ENCODE measurements at regions of chr11 and their contacts with region 1.

Region 1: GRCh38 chr11:35126000-35126878 is 12.7 kb upstream of the CD44 start:
- DNase-seq: peak; percentile 79
- H3K4me3 Mint-ChIP-seq: peak overlapping the region; percentile 74
- H3K27ac Mint-ChIP-seq: peak overlapping the region; percentile 80
- H3K4me1 Mint-ChIP-seq: peaks cover 50% of the 10 kb centered on the region
- H3K27me3 Mint-ChIP-seq: peaks cover 3% of the 10 kb centered on the region

Region 2: DNA sequence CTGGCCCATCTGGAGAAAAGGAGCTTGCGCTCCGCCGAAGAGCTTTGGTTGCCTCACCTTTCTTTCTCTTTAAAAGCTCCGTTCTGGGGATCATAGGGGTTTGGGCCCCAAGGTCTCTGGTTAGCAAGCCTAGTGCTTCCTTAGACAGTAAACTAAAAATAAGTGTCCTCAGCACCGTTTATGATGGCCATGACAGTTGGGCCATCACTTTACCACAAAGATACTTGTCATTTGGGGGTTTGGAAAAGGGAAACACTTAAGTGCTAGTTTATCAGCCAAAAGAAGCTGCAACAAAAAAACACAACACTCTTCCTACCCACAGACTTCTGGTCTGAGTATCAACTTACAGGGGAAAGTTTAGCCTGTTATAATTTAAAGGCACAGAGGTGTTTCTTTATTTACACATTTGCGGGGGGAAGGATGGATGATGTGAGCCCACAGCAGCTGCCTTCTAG is 75.7 kb before region 1 on chr11:
- intact Hi-C with region 1: no loop called
- DNase-seq: peak; percentile 73
- H3K4me3 Mint-ChIP-seq: peak overlapping the region; percentile 83
- H3K27ac Mint-ChIP-seq: peak overlapping the region; percentile 89
- H3K4me1 Mint-ChIP-seq: peaks cover 56% of the 10 kb centered on the region
- H3K27me3 Mint-ChIP-seq: no peaks in the 10 kb centered on the region

Region 3: GRCh38 chr11:35087648-35088047 is 38.6 kb before region 1 on chr11:
- intact Hi-C with region 1: loop called (anchors 1 kb)
- DNase-seq: peak; percentile 64
- H3K4me3 Mint-ChIP-seq: peak overlapping the region; percentile 9
- H3K27ac Mint-ChIP-seq: peak overlapping the region; percentile 61
- H3K4me1 Mint-ChIP-seq: peaks cover 51% of the 10 kb centered on the region
- H3K27me3 Mint-ChIP-seq: peaks cover 4% of the 10 kb centered on the region

Region 4: GRCh38 chr11:35138943-35139721 is 12.9 kb after region 1 on chr11 and contains the start of gene CD44:
- intact Hi-C with region 1: loop called (anchors 1 kb)
- DNase-seq: peak; percentile 91
- H3K4me3 Mint-ChIP-seq: peak within 1 kb of the TSS; percentile 94
- H3K27ac Mint-ChIP-seq: peak within 1 kb of the TSS; percentile 97
- H3K4me1 Mint-ChIP-seq: peaks cover 49% of the 10 kb centered on the region
- H3K27me3 Mint-ChIP-seq: no peaks in the 10 kb centered on the region
- total RNA-seq, gene CD44: 488 and 489 TPM in 2 replicates

Region 5: GRCh38 chr11:35165423-35166368 is 39.5 kb after region 1 on chr11:
- intact Hi-C with region 1: loop called (anchors 1 kb)
- DNase-seq: peak; percentile 98
- H3K4me3 Mint-ChIP-seq: peak overlapping the region; percentile 78
- H3K27ac Mint-ChIP-seq: peak overlapping the region; percentile 99
- H3K4me1 Mint-ChIP-seq: peaks cover 93% of the 10 kb centered on the region
- H3K27me3 Mint-ChIP-seq: no peaks in the 10 kb centered on the region

Region 6: GRCh38 chr11:35174666-35175065 is 48.4 kb after region 1 on chr11:
- intact Hi-C with region 1: loop called (anchors 1 kb)
- DNase-seq: peak; percentile 69
- H3K4me3 Mint-ChIP-seq: peak overlapping the region; percentile 57
- H3K27ac Mint-ChIP-seq: peak overlapping the region; percentile 85
- H3K4me1 Mint-ChIP-seq: peaks cover 85% of the 10 kb centered on the region
- H3K27me3 Mint-ChIP-seq: no peaks in the 10 kb centered on the region

Region 7: DNA sequence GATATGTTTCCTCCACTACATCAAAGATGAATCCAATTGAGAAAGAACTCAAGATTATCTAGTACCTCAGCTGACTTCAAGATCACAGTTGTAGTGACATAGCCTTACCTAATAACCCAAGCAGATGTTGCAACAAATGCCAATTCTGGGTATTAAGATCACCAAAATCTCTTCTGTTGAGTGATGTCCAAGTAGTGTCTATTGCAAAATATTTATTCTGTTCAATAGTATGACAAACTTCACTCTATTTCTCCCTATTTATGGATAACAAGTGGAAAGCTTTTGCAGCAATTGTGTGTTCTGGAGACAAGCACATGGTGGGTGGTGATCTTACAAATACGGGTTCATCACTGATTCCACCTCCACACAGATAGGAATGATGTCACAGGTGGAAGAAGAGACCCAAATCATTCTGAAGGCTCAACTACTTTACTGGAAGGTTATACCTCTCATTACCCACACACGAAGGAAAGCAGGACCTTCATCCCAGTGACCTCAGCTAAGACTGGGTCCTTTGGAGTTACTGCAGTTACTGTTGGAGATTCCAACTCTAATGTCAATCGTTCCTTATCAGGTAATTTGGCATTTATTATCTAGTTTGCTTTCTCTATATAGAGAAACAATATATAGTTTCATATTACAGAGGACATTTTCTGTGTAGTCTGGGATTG is 84.8 kb after region 1 on chr11:
- intact Hi-C with region 1: no loop called
- DNase-seq: no peak
- H3K4me3 Mint-ChIP-seq: no peak overlapping the region
- H3K27ac Mint-ChIP-seq: no peak overlapping the region
- H3K4me1 Mint-ChIP-seq: peaks cover 20% of the 10 kb centered on the region
- H3K27me3 Mint-ChIP-seq: no peaks in the 10 kb centered on the region

Region 8: DNA sequence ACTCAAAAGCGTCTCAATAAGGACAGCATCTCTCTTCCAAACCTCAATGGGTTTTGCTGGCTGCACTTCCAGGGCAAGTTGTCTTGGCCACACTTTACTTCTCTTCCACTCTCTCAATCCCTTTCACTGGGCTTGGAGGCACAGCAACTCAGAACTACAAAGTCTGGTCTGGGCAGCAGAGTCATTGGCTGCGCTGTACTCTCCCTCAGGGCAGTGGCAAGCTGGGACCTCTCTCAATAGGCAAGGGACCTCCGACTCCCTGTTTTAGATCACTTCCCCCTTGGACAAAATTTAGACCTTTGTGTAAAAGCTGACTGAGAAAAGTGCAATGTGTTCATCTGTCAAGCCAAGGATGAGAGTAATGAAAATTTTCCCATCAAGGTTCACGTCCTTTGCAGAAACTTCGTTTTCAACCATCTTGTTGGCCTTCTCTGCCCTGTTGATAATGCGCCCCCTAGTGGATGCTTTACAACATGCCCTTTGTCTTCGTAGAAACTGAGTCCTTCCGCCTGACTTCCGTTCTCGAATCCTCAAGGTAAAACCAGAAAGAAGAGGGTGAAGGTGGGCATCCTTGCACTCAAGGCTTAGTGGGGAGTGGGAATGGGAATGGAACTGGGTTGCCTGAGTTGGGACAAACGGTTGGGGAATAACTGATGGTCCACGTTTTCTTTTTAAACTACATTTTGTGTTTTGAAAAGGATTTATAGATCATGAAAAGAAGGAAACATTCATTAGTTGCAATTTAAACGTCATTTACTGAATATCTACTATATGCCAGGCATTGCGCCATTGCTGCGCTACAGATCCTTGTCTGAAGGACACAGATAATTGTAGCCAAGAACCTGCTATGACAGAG is 111.8 kb after region 1 on chr11:
- intact Hi-C with region 1: no loop called
- DNase-seq: peak; percentile 88
- H3K4me3 Mint-ChIP-seq: peak overlapping the region; percentile 33
- H3K27ac Mint-ChIP-seq: no peak overlapping the region
- H3K4me1 Mint-ChIP-seq: peaks cover 69% of the 10 kb centered on the region
- H3K27me3 Mint-ChIP-seq: peaks cover 7% of the 10 kb centered on the region

Region 9: GRCh38 chr11:35288817-35289541 is 162.7 kb after region 1 on chr11:
- intact Hi-C with region 1: loop called (anchors 5 kb)
- DNase-seq: no peak
- H3K4me3 Mint-ChIP-seq: peak overlapping the region; percentile 19
- H3K27ac Mint-ChIP-seq: peak overlapping the region; percentile 70
- H3K4me1 Mint-ChIP-seq: peaks cover 29% of the 10 kb centered on the region
- H3K27me3 Mint-ChIP-seq: no peaks in the 10 kb centered on the region

Measured in activated CD4-positive, alpha-beta T cell treated with anti-CD3 and anti-CD28 coated beads, Interleukin-2, amount 10 ng/mL, durations not matched to agents 24 days and 14 days (primary cell).